ENCODE measurements at regions of chr11 and their contacts with region 1.

Region 1: DNA sequence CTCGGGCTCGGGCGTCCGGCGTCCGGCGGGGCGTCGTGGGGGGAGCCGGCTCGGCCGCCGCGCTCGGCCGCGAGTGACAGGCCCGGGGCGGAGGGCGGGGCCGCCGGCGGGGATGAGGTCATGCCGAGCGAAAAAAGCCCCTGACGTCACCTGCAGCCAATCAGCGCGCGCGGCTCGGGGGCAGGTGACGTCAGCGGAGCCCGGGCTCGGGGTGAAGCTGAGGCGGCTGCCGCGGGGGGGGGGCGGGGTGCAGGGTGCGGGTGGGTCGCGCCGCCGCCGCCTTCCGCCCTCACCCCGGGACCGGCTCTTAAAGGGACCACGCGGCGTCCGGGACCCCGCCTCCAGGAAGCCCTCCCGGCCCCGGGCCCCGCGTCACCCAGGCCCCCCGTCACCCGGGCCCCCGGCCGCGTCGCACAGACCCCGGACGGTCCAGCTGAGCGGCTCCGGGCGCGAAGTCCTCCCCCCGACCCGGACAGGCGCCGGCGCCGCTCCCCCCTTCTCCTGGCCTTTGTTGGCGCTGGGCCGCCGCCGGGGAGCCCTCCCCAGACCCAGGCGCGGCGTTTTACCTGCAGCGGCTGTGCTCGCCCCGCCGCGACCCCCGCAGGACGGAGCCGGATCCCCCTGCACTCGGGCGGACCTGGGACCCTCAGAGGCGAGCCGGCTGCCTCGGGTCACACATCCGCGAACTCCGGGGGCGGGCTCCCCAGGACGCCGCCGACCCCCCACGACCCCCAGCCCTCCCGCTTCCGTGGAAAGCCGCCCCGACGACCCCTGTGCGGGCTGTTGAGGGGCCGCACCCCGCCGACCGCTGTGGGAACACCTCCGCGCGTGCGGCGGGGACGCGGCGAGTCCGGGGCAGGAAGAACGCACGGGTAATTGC is at the start of gene DUSP8:
- DNase-seq: peak; percentile 95
- ATAC-seq: peak; percentile 81
- total RNA-seq, gene DUSP8: 7.7 TPM

Region 2: DNA sequence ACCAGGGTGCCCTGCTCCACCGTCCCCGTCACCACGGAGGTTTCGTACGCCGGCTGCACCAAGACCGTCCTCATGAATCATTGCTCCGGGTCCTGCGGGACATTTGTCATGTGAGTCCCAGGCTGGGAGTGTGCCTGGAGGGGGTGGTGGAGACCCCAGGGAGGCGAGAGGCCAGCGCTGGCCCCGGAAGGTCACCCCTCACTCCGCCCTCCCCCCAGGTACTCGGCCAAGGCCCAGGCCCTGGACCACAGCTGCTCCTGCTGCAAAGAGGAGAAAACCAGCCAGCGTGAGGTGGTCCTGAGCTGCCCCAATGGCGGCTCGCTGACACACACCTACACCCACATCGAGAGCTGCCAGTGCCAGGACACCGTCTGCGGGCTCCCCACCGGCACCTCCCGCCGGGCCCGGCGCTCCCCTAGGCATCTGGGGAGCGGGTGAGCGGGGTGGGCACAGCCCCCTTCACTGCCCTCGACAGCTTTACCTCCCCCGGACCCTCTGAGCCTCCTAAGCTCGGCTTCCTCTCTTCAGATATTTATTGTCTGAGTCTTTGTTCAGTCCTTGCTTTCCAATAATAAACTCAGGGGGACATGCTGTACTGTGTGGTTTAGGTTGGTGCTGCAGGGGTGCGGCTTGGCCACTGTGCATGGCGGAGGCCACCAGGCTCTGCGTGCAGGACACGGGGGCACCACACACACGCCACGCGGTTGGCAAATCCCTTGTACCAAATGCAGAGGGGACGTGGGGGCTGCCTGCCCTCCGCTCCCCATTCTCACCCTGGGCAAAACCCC is 462.3 kb before region 1 on chr11:
- intact Hi-C with region 1: no loop called
- DNase-seq: peak; percentile 39
- ATAC-seq: no peak

Region 3: GRCh38 chr11:1202776-1203504 is 369.5 kb before region 1 on chr11:
- intact Hi-C with region 1: loop called (anchors 10 kb)
- DNase-seq: peak; percentile 80
- ATAC-seq: peak; percentile 85

Region 4: DNA sequence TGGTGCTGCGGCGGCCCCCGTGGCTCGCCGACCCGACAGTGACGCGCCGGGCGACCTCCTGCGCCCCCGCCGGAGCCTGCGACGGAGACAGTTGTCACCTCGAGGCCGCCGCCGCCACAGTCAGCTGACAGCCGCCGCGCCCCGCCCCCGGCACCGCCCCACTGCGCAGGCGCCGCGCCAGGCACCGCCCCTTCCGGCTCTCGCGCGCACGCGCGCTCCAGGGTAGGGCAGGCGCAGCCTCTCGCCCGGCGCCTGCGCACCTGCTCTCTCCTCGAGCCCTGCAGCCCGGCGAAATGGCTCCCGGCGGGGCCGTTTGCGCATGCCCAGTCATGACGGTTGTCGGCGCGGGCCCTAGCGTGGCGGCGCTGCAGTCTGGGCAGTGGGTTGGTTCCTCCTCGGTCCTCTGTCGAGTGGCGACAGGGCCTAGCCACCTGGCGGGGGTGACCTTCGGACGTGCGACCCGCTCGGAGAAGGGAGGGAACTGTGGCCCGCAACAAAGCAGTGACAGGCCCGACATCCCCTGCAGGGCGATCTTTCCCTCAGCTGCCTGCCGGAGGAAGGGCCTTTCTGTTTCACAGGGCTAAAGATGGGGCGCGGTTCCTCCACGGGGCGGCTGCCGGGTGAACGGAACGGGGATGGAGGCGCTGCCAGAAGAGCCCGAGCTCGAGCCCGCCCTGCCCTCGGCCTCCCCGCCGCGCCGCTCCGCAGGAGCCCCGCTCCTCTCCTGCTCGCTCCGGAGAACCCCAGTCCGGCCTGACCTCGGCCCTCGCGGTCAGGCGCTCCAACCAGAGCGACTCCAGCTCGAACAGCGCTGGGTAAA is 262.7 kb before region 1 on chr11 and contains the start of gene TOLLIP:
- intact Hi-C with region 1: loop called (anchors 10 kb)
- DNase-seq: peak; percentile 98
- ATAC-seq: peak; percentile 97
- total RNA-seq, gene TOLLIP: 49.9 TPM

Region 5: GRCh38 chr11:1546536-1547400 is 25.7 kb before region 1 on chr11:
- intact Hi-C with region 1: loop called (anchors 2 kb)
- DNase-seq: no peak
- ATAC-seq: peak; percentile 76